ENCODE measurements at regions of chr11 and their contacts with region 1.

Region 1: GRCh38 chr11:63768237-63769043 is at the start of gene ZFTA:
- DNase-seq: peak; percentile 64
- ATAC-seq: peak; percentile 66
- H3K4me3 Mint-ChIP-seq: peak within 1 kb of the TSS; percentile 92
- H3K27ac Mint-ChIP-seq: peak within 1 kb of the TSS; percentile 81
- H3K4me1 Mint-ChIP-seq: peaks cover 15% of the 10 kb centered on the region
- H3K27me3 Mint-ChIP-seq: peaks cover 27% of the 10 kb centered on the region
- total RNA-seq, gene ZFTA: 4.5 to 5.6 TPM

Region 2: GRCh38 chr11:63779039-63779438 is 10.6 kb after region 1 on chr11:
- CTCF ChIA-PET with region 1: interaction called, 11 read pairs
- POLR2A ChIA-PET with region 1: no interaction called
- DNase-seq: no peak
- ATAC-seq: no peak
- H3K4me3 Mint-ChIP-seq: no peak overlapping the region
- H3K27ac Mint-ChIP-seq: no peak overlapping the region
- H3K4me1 Mint-ChIP-seq: no peaks in the 10 kb centered on the region
- H3K27me3 Mint-ChIP-seq: peaks cover 16% of the 10 kb centered on the region